Posterior vena cava (tissue), 2 donors: ENCODE measurements at regions of chr16 and their contacts with region 1.

Region 1: GRCh38 chr16:88737298-88738150 is 31.2 kb downstream of the CTU2 start:
- DNase-seq: peak; percentile 92

Region 2: DNA sequence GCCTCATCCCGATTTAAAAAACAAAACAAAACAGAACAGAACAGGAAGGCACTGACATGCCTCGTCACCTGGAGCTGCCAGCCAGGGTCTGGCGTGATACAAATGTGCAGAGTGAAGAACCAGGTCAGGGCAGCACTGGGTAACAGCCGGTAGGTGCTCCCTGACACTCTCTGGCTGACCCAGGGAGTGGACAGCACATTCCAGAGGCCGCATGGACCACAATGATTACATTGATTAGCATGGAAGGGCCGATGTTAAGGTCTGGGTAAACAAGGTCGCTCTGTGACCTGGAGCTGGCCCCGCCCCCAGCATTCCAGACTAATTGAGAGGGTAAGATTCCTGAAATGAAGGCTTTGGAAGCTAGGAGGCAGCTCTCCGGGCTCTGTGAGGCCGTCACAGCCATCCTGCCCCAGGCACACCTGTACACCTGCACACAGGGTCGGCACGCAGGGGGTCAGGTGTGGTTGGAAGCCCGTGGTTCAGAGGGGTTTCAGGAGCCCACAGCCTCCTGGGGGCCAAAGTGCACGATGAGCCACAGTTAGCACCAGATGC is 26.1 kb after region 1 on chr16:
- intact Hi-C with region 1: loop called in 1 of 2 experiments (anchors 2 kb)
- DNase-seq: no peak

Region 3: DNA sequence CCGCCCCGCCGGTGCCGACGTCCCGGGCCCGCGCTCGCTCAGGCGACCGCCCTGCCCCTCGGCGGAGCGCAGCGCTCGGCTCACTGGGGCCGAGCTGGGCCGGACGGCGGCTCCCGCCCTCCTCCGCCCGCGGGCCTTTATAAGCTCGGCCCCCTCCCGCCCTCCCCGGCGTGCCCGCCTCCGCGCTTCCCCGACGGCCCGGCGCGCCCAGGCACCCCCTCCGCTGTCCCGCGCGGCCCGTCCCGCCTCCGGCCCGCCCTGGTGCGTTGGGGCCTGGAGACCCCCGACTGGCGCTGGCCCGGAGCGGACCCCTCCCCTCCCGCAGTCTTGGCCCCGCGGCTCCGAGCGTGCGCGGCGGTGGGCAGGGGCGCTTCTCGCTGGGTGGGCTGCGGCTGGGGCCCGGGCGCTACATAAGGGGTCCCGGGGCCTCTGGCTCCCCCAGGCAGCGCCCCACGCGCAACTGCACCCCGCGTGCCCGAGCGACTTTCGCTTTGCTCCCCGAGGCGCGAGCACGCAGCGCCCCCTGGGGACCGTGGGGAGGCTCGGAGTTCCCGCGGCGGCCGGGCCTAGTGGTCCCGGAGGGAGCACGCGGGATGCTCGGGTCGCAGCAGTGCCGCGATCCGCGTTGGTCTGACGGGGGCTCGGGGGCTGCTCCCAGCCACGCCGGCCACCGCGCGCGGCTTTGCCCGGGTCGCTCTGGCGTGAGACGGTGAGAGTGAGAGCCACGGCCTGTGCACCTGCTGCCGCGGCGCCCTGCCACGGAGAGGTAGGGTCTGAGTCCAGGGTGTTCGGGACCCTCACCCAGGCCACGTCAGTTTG is 47.8 kb after region 1 on chr16 and contains the start of gene PIEZO1:
- intact Hi-C with region 1: loop called (anchors 2 kb)
- DNase-seq: peak; percentile 95
- total RNA-seq, gene PIEZO1: 99.3 to 103 TPM